ENCODE measurements at regions of chr10 and their contacts with region 1.

Region 1: DNA sequence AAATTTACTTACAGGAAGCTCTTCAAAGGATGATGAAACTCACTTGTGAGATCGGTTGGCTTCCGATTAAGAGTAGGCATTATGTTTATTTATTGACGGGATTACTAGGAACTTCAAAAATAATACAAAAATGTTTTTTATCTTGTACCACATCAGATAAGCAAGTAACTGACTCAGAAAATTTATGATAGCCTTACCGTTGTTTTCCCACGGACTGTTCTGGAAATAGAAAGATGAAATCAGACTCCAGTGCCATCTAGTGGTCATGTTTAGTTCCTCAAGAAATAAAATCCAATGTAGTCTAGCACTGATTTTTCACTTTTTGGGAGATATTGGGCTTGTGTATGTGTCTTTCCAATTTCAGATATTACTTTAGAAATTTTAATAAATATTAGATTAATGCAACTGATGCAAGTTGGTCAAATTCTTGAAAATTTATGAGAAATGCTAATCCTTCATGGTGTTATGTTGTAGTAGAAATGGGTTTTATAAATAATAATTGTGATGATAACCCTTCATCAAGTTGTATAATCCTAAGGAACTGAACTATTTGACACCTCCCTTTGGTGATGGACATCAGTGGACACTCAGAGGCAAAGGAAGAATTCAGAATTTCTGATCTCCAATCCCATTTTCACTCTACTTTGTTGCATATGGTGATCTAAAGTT is 168.8 kb downstream of the TMEM26 start:
- DNase-seq: no peak
- H3K4me3 ChIP-seq: no peak overlapping the region
- CTCF ChIP-seq: no peak
- POLR2A ChIP-seq: no peak

Region 2: DNA sequence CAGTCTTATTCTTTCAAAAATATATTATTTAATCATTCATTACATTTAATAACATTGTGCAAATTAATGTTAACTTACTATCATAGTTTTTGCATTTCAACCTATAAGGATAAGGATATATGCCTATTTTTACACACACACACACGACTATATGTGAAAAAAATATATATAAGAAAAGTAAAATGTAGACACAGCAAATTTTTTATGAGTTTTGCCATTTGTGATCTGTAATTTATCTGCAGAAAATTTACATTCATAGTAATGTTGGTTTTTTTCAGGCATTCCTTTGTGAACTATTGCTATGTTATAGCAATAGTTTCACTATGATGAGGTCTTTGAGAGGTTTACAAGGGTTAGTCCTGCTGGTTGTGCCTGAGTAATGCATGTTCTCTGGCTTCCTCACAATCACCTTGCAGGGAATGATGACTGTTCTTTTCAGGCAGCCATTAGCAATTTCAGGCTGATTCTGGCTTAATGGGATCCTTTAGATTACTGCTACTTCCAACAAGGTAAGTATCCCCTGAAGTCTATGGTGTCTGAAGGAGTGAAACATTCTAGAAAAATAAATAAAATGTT is 689.8 kb before region 1 on chr10:
- intact Hi-C with region 1: no loop called
- DNase-seq: no peak
- H3K4me3 ChIP-seq: no peak overlapping the region
- CTCF ChIP-seq: no peak
- POLR2A ChIP-seq: no peak

Region 3: GRCh38 chr10:61140765-61141392 is 143.5 kb before region 1 on chr10:
- intact Hi-C with region 1: loop called (anchors 10 kb)
- DNase-seq: no peak
- H3K4me3 ChIP-seq: no peak overlapping the region
- CTCF ChIP-seq: no peak
- POLR2A ChIP-seq: no peak

Region 4: GRCh38 chr10:61376862-61377368 is 92.6 kb after region 1 on chr10:
- intact Hi-C with region 1: no loop called
- DNase-seq: no peak
- H3K4me3 ChIP-seq: no peak overlapping the region
- CTCF ChIP-seq: no peak
- POLR2A ChIP-seq: no peak